ENCODE measurements at regions of chr21 and their contacts with region 1.

Region 1: GRCh38 chr21:26834181-26834945 is 10.8 kb downstream of the ADAMTS1 start:
- DNase-seq: no peak
- H3K4me3 ChIP-seq: no peak overlapping the region
- H3K27ac ChIP-seq: no peak overlapping the region
- H3K27me3 ChIP-seq: no peaks in the 10 kb centered on the region
- CTCF ChIP-seq: peak; percentile 49

Region 2: DNA sequence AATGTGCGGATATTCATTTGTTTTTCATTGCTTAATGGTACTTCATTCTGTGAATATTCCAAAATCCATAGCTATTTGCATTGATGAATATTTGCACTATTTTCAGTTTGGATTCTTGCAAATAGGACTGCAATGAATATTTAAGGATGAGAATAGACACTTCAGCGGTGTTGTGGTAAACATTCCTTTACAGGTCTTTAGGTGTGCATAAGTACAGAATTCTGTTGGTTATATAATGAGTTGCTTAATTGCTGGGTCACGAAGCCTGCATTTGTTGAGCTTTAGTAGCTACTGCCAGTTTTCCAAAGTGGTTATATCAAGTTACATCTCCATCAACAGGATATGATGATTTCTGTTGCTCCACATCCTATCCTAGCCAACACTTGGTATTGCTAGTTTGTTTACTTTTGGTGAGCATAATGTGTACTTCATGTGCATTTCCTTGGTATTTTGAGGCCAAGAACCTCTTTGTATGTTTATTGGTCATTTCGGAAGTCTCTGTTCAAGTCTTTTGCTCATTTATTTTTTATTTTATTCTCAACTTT is 197.1 kb before region 1 on chr21:
- CTCF ChIA-PET with region 1: no interaction called
- POLR2A ChIA-PET with region 1: no interaction called
- DNase-seq: no peak
- H3K4me3 ChIP-seq: no peak overlapping the region
- H3K27ac ChIP-seq: no peak overlapping the region
- H3K27me3 ChIP-seq: no peaks in the 10 kb centered on the region
- CTCF ChIP-seq: no peak

Region 3: GRCh38 chr21:26769613-26770188 is 64.7 kb before region 1 on chr21:
- CTCF ChIA-PET with region 1: interaction called, 11 read pairs
- POLR2A ChIA-PET with region 1: no interaction called
- DNase-seq: peak; percentile 20
- H3K4me3 ChIP-seq: no peak overlapping the region
- H3K27ac ChIP-seq: no peak overlapping the region
- H3K27me3 ChIP-seq: no peaks in the 10 kb centered on the region
- CTCF ChIP-seq: peak; percentile 66

Region 4: GRCh38 chr21:26851109-26851944 is 17.0 kb after region 1 on chr21:
- CTCF ChIA-PET with region 1: no interaction called
- POLR2A ChIA-PET with region 1: no interaction called
- DNase-seq: no peak
- H3K4me3 ChIP-seq: no peak overlapping the region
- H3K27ac ChIP-seq: no peak overlapping the region
- H3K27me3 ChIP-seq: no peaks in the 10 kb centered on the region
- CTCF ChIP-seq: no peak

Region 5: DNA sequence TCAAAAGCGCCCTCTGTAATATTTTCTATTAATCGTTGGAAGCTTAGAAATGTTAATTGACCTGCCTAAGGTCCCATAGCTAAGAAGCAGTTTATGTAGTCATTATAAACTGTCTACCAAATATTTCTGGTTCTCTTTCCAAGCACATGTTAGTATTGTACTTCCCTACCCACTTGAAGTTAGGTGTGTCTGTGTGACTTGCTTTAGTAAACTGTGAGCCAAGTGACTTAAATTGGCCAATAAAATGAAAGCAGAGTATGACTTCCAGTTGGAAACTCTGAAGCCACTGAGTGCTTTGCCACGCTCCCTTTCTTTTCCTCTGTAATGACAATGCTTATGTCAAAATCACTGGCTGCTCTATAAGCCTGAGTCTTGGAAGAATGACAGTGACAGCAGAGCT is 31.5 kb after region 1 on chr21:
- CTCF ChIA-PET with region 1: no interaction called
- POLR2A ChIA-PET with region 1: no interaction called
- DNase-seq: no peak
- H3K4me3 ChIP-seq: no peak overlapping the region
- H3K27ac ChIP-seq: no peak overlapping the region
- H3K27me3 ChIP-seq: no peaks in the 10 kb centered on the region
- CTCF ChIP-seq: no peak